ENCODE measurements at regions of chr19 and their contacts with region 1.

Region 1: GRCh38 chr19:51703575-51704515 is 10.7 kb downstream of the SPACA6 start:
- DNase-seq: peak; percentile 93 to 94
- ATAC-seq: peak; percentile 82 to 89
- H3K4me3 ChIP-seq: peak overlapping the region; percentile 54
- H3K27ac ChIP-seq: peak overlapping the region; percentile 87 to 96
- H3K4me1 ChIP-seq: peaks cover 26% of the 10 kb centered on the region; the same call in 2 of the 3 replicates
- CTCF ChIP-seq: peak; percentile 52
- EP300 ChIP-seq: no peak
- POLR2A ChIP-seq: peak; percentile 57
- RAD21 ChIP-seq: no peak; a peak in 2 of 5 replicates

Region 2: GRCh38 chr19:51688672-51689571 is 14.9 kb before region 1 on chr19:
- CTCF ChIA-PET with region 1: interaction called, 28 read pairs
- POLR2A ChIA-PET with region 1: interaction called, 29 read pairs
- DNase-seq: peak; percentile 71 to 95
- ATAC-seq: peak; percentile 52 to 73
- H3K4me3 ChIP-seq: peak overlapping the region; percentile 77
- H3K27ac ChIP-seq: peak overlapping the region; percentile 95 to 100
- H3K4me1 ChIP-seq: peaks cover 43% of the 10 kb centered on the region
- CTCF ChIP-seq: no peak
- EP300 ChIP-seq: peak in 1 of 2 experiments; percentile 31; a peak in 1 of 5 replicates
- POLR2A ChIP-seq: peak; percentile 62
- RAD21 ChIP-seq: peak in 1 of 2 experiments; percentile 14; a peak in 2 of 5 replicates

Region 3: DNA sequence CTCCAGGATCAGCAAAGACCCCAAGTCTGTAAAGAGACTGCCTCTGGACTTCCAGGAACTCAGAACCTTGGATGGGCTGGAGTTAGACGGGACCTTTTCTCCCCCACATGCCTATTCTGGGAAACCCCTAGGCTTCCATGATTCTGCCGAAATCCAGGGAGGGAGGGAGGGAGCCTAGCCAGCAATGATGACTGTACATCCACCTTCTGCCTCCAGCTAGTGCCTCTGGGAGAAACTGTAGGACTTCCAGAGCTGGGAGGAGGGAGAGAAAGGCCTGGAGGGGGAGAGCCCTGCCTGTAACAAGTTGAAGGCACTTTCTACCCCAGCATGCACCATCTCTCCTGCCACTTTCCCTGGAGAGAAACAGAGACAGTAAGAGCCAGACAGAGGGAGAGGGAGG is 25.9 kb after region 1 on chr19:
- CTCF ChIA-PET with region 1: no interaction called
- POLR2A ChIA-PET with region 1: no interaction called
- DNase-seq: no peak
- ATAC-seq: no peak
- H3K4me3 ChIP-seq: no peak overlapping the region
- H3K27ac ChIP-seq: no peak overlapping the region
- H3K4me1 ChIP-seq: no peaks in the 10 kb centered on the region
- CTCF ChIP-seq: no peak
- EP300 ChIP-seq: no peak
- POLR2A ChIP-seq: no peak
- RAD21 ChIP-seq: no peak

Measured in A549 (cell line).